PC-3 (cell line): ENCODE measurements at regions of chr18 and their contacts with region 1.

Region 1: GRCh38 chr18:58572181-58572580 is 56.7 kb downstream of the ALPK2 start:
- DNase-seq: peak; percentile 99
- ATAC-seq: peak; percentile 83
- H3K4me3 ChIP-seq: no peak overlapping the region
- H3K27ac ChIP-seq: peak overlapping the region; percentile 61
- H3K4me1 ChIP-seq: peaks cover 24% of the 10 kb centered on the region
- H3K27me3 ChIP-seq: no peaks in the 10 kb centered on the region
- CTCF ChIP-seq: no peak

Region 2: GRCh38 chr18:58549738-58550339 is 22.3 kb before region 1 on chr18:
- CTCF ChIA-PET with region 1: no interaction called
- POLR2A ChIA-PET with region 1: no interaction called
- intact Hi-C with region 1: loop called (anchors 1 kb)
- DNase-seq: peak; percentile 72
- ATAC-seq: peak; percentile 79
- H3K4me3 ChIP-seq: no peak overlapping the region
- H3K27ac ChIP-seq: peak overlapping the region; percentile 49
- H3K4me1 ChIP-seq: peaks cover 42% of the 10 kb centered on the region
- H3K27me3 ChIP-seq: no peaks in the 10 kb centered on the region
- CTCF ChIP-seq: no peak